GM12878 (cell line): ENCODE measurements at regions of chr2 and their contacts with region 1.

Region 1: GRCh38 chr2:64704161-64704560 is 50.4 kb upstream of the SERTAD2 start:
- DNase-seq: no peak
- ATAC-seq: peak; percentile 14
- H3K4me3 ChIP-seq: 0 out of 2 replicates have a peak overlapping the region, but pooled peaks have one; percentile 7
- H3K27ac ChIP-seq: peak overlapping the region; percentile 54
- H3K4me1 ChIP-seq: peaks cover 30% of the 10 kb centered on the region
- H3K27me3 ChIP-seq: no peaks in the 10 kb centered on the region
- CTCF ChIP-seq: no peak
- EP300 ChIP-seq: no peak
- POLR2A ChIP-seq: no peak
- RAD21 ChIP-seq: no peak

Region 2: DNA sequence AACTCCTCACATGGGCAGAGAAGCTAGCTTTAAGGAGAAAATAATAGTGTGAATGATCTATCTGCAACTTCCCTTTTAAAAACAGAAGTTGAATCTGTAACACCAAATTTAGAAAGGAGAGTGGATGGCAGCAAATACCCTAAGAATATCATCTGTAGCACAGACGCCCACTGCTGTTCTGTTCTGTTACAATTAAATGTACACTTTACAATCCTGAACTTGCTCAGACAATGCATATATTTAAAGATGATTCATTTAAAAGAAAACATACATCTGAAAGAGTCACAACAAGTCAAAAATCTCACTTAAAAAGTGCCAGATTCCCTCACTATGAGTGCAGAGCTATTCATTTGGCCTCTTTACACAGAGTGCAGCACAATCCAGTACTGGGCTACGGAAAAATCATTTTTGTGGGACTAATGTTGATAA is 42.4 kb before region 1 on chr2:
- CTCF ChIA-PET with region 1: interaction called, 9 read pairs
- POLR2A ChIA-PET with region 1: interaction called, 7 read pairs
- RAD21 ChIA-PET with region 1: interaction called, 13 read pairs
- SMC1A ChIA-PET with region 1: interaction called, 262 read pairs
- in situ Hi-C with region 1: no loop called
- intact Hi-C with region 1: no loop called
- DNase-seq: no peak
- ATAC-seq: peak; percentile 81
- H3K4me3 ChIP-seq: no peak overlapping the region
- H3K27ac ChIP-seq: peak overlapping the region; percentile 56; the same call in 1 of the 2 replicates
- H3K4me1 ChIP-seq: peaks cover 40% of the 10 kb centered on the region
- H3K27me3 ChIP-seq: no peaks in the 10 kb centered on the region
- CTCF ChIP-seq: peak in 1 of 3 experiments; percentile 23; a peak in 1 of 6 replicates
- EP300 ChIP-seq: peak in 1 of 2 experiments; percentile 33; a peak in 1 of 4 replicates
- POLR2A ChIP-seq: no peak
- RAD21 ChIP-seq: no peak

Region 3: GRCh38 chr2:64666810-64667438 is 37.2 kb before region 1 on chr2:
- CTCF ChIA-PET with region 1: interaction called, 9 read pairs
- POLR2A ChIA-PET with region 1: interaction called, 5 read pairs
- RAD21 ChIA-PET with region 1: interaction called, 13 read pairs
- SMC1A ChIA-PET with region 1: interaction called, 262 read pairs
- in situ Hi-C with region 1: no loop called
- intact Hi-C with region 1: no loop called
- DNase-seq: no peak
- ATAC-seq: peak; percentile 81
- H3K4me3 ChIP-seq: peak overlapping the region; percentile 33
- H3K27ac ChIP-seq: peak overlapping the region; percentile 71
- H3K4me1 ChIP-seq: peaks cover 15% of the 10 kb centered on the region
- H3K27me3 ChIP-seq: no peaks in the 10 kb centered on the region
- CTCF ChIP-seq: no peak
- EP300 ChIP-seq: no peak; a peak in 1 of 4 replicates
- POLR2A ChIP-seq: no peak
- RAD21 ChIP-seq: peak; percentile 4; the same call in 1 of the 2 replicates

Region 4: DNA sequence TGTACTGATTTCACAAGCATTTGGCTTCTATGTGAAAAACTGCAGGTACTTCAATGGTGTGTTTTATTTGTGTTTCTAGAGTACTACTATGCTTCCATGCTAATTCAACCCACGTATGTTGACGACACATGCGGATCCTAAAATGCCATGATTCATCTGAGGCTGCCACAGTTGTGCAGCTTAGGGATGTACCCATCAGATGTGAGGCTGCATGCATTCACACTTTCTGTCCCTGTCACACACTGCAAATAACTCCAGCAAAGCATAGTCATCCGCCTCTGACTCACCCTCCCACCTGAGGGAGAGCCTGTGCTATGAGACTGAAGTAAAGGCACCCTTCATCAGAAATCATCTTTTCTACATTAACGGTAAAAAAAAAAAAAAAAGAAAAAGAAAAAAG is 28.3 kb before region 1 on chr2:
- CTCF ChIA-PET with region 1: interaction called, 3 read pairs
- POLR2A ChIA-PET with region 1: interaction called, 6 read pairs
- RAD21 ChIA-PET with region 1: interaction called, 5 read pairs
- SMC1A ChIA-PET with region 1: interaction called, 52 read pairs
- in situ Hi-C with region 1: no loop called
- intact Hi-C with region 1: no loop called
- DNase-seq: no peak
- ATAC-seq: peak; percentile 38; the same call in 2 of the 3 replicates
- H3K4me3 ChIP-seq: no peak overlapping the region
- H3K27ac ChIP-seq: no peak overlapping the region
- H3K4me1 ChIP-seq: peaks cover 20% of the 10 kb centered on the region
- H3K27me3 ChIP-seq: no peaks in the 10 kb centered on the region
- CTCF ChIP-seq: no peak
- EP300 ChIP-seq: no peak
- POLR2A ChIP-seq: no peak
- RAD21 ChIP-seq: no peak

Region 5: GRCh38 chr2:64720535-64721327 is 16.6 kb after region 1 on chr2:
- CTCF ChIA-PET with region 1: interaction called, 22 read pairs
- POLR2A ChIA-PET with region 1: interaction called, 35 read pairs
- RAD21 ChIA-PET with region 1: interaction called, 49 read pairs
- SMC1A ChIA-PET with region 1: interaction called, 105 read pairs
- in situ Hi-C with region 1: no loop called
- intact Hi-C with region 1: no loop called
- DNase-seq: no peak
- ATAC-seq: no peak
- H3K4me3 ChIP-seq: no peak overlapping the region
- H3K27ac ChIP-seq: no peak overlapping the region
- H3K4me1 ChIP-seq: peaks cover 14% of the 10 kb centered on the region
- H3K27me3 ChIP-seq: no peaks in the 10 kb centered on the region
- CTCF ChIP-seq: no peak
- EP300 ChIP-seq: no peak
- POLR2A ChIP-seq: no peak
- RAD21 ChIP-seq: no peak

Region 6: GRCh38 chr2:64745562-64745961 is 41.4 kb after region 1 on chr2:
- CTCF ChIA-PET with region 1: interaction called, 4 read pairs
- POLR2A ChIA-PET with region 1: interaction called, 43 read pairs
- RAD21 ChIA-PET with region 1: interaction called, 44 read pairs
- SMC1A ChIA-PET with region 1: interaction called, 38 read pairs
- in situ Hi-C with region 1: no loop called
- intact Hi-C with region 1: loop called (anchors 2 kb)
- DNase-seq: no peak
- ATAC-seq: peak; percentile 39
- H3K4me3 ChIP-seq: peak overlapping the region; percentile 46
- H3K27ac ChIP-seq: peak overlapping the region; percentile 10
- H3K4me1 ChIP-seq: no peaks in the 10 kb centered on the region
- H3K27me3 ChIP-seq: no peaks in the 10 kb centered on the region
- CTCF ChIP-seq: no peak
- EP300 ChIP-seq: no peak
- POLR2A ChIP-seq: no peak
- RAD21 ChIP-seq: no peak

Region 7: DNA sequence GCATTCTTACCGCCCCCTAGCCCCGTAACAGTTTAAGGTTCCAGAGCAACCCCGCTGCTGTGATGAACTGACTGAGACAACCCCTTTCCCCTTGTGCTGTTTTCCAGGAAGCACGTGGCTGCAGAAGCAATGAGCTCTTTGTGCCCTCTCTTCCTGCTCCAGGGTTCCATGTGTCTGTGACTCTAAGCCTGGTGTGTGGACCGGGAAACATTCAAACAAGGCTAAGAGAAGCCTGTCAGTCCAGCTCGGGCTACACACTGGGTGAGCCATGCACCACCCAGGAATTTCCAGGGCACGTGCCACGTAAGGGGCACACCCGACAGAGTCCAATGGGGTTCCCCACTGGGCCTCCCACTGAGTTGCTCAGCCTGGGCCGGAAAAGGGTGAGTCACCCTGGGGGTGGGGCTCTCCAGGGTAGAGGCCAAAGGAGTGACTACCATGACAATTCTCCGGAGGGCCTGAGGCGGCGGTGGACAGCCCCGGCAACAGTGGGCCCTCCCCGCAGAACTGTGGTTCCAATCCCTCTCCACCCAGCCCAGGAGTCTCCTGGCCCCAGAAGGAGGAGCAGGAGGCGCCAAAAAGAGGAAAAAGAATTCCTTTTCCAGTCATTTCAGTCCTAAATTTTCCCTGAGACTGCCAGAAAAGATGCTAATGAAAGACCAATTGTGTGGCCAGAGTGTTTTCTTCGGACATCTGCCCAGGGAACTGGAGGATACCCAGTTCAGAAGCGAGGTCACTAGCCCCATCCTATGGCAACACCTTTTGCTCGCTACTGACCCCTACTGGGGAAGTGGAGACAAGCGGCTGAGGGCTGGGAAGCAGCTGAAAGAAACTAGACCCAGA is 127.2 kb after region 1 on chr2:
- CTCF ChIA-PET with region 1: interaction called, 3 read pairs
- POLR2A ChIA-PET with region 1: no interaction called
- RAD21 ChIA-PET with region 1: interaction called, 4 read pairs
- SMC1A ChIA-PET with region 1: interaction called, 10 read pairs
- in situ Hi-C with region 1: no loop called
- intact Hi-C with region 1: no loop called
- DNase-seq: peak; percentile 71
- ATAC-seq: peak; percentile 96
- H3K4me3 ChIP-seq: peak overlapping the region; percentile 19; the same call in 1 of the 2 replicates
- H3K27ac ChIP-seq: peak overlapping the region; percentile 80
- H3K4me1 ChIP-seq: peaks cover 12% of the 10 kb centered on the region
- H3K27me3 ChIP-seq: no peaks in the 10 kb centered on the region
- CTCF ChIP-seq: peak; percentile 80 to 99 (median 98)
- EP300 ChIP-seq: 0 out of 4 replicates have a peak, but pooled peaks of 1 of the 2 experiments have one; percentile 10
- POLR2A ChIP-seq: no peak; the same call in none of the 2 replicates
- RAD21 ChIP-seq: peak; percentile 85

Region 8: DNA sequence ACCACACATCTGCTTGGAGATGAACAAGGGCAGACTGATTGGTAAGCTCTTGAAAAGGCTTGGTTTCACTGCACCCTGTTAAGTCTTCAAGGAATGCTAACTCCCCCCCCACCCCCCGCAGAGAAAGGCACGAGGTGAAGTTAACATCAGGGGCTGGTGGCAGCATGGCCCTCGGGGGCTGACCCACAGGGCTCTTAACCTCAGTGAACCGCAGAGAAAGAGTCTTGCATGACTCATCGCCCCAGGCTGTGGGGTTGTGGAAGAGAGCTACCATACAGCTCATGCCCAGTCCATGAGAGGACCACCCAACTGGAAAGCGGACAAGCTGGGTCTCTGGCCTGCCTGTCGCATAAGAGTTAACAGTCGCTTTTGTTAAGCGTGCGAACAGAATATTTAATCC is 341.5 kb after region 1 on chr2:
- CTCF ChIA-PET with region 1: no interaction called
- POLR2A ChIA-PET with region 1: no interaction called
- RAD21 ChIA-PET with region 1: no interaction called
- SMC1A ChIA-PET with region 1: no interaction called
- in situ Hi-C with region 1: no loop called
- intact Hi-C with region 1: no loop called
- DNase-seq: no peak
- ATAC-seq: no peak
- H3K4me3 ChIP-seq: no peak overlapping the region
- H3K27ac ChIP-seq: no peak overlapping the region
- H3K4me1 ChIP-seq: no peaks in the 10 kb centered on the region; the same call in 1 of the 2 replicates
- H3K27me3 ChIP-seq: no peaks in the 10 kb centered on the region
- CTCF ChIP-seq: no peak
- EP300 ChIP-seq: no peak
- POLR2A ChIP-seq: no peak
- RAD21 ChIP-seq: no peak